ENCODE measurements at regions of chr2 and their contacts with region 1.

Region 1: DNA sequence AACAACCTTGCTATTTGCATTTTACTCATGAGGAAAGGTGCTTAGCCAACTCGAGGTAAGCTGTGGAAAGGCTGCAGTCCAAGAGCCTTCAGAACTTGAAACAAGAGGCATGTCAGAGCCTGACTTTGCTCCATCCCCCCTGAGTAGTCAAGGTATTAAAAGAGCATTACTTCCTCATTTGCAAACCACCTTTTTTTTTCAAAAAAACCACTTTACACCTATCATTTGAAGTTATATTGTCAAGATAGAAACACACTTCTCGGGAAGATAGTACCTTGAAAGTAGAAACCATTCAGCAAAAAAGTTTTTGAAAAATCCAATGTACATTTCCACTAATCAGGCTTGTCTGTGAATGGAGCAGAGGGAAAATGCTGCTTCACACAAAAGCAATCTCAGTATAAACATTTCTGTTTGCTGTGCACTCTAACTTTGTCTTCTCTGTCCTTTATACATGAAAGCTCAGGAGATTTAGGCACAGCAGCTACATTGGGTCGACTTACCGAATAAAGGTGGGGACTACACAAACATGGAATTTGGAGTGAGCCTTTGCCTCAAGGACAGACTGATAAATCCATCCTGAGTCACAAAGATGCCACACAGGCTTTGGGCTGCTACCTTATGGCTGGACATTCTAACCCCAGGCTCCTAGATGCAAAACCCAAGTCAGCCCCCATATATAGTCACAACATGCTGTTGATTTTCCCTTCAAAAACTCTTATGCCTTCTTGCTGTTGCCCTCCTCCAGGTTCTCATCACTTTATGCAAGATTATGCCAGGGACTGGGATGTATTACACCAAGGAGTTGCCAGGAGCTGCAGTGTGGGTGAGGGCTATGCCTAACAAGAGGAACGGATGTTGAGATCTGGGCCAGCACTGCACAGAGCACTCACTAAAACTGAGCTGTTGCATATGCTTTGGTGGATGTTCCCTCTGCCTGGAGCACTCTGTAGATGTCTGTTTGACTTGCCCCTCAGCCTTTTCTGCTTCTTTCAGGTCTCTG is 41.4 kb upstream of the EML4 start:
- DNase-seq: peak; percentile 45
- H3K4me3 Mint-ChIP-seq: peak overlapping the region; percentile 48
- H3K27ac Mint-ChIP-seq: peak overlapping the region; percentile 88
- H3K4me1 Mint-ChIP-seq: peaks cover 92% of the 10 kb centered on the region
- H3K27me3 Mint-ChIP-seq: no peaks in the 10 kb centered on the region

Region 2: DNA sequence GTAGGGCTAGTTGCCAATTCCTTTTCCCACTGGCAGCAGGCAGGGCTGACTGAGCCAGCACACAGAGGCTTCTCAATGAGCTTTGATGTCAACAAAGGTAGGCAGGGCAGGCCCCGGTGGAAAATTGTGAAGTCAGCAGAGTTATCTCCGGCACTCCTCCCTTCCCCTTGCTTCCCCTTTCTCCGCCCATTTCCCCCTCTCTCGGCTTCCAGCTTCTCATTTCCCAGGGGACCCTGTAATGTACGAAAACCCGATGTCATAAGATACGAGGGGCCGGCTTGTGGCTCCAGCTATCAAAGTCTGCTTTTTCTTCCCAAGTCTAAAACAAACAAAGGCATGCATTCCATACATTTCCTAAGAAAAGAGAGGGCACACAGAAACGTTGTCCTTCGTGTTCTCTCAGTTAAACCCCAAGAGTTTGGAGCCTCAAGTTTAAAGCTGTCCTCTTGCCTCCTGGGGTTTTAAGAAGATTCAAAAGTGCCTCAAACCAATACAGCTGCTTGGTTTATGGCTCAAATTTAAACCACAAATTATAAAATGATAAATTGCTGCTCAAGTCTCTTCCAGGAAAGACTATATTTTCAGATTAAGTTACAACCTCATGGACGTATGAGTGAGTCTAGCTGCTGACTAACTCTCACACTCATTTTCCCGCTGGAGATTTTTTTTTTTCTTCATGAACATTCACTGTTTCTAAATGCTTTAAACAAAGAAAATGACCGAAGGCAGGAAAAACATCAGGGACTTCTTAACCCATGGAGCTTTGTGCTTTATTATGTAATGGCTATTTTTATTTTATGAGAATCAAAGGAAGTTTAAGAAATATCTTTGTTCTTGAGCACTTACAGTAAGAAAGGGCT is 14.2 kb after region 1 on chr2:
- CTCF ChIA-PET with region 1: interaction called, 15 read pairs
- POLR2A ChIA-PET with region 1: interaction called, 27 read pairs
- DNase-seq: no peak
- H3K4me3 Mint-ChIP-seq: peak overlapping the region; percentile 46
- H3K27ac Mint-ChIP-seq: peak overlapping the region; percentile 72
- H3K4me1 Mint-ChIP-seq: peaks cover 62% of the 10 kb centered on the region
- H3K27me3 Mint-ChIP-seq: no peaks in the 10 kb centered on the region

Measured in activated CD4-positive, alpha-beta memory T cell treated with anti-CD3 and anti-CD28 coated beads, Interleukin-2, amount 10 ng/mL, durations not matched to agents 7 days and 5 days (primary cell).